Naive thymus-derived CD4-positive, alpha-beta T cell (primary cell): ENCODE measurements at regions of chr1 and their contacts with region 1.

Region 1: GRCh38 chr1:184222652-184223052 is 164.2 kb upstream of the C1orf21 start:
- DNase-seq: peak in 6 of 9 donors; percentile 11 to 31 (median 26)
- ATAC-seq: peak; percentile 60
- H3K4me3 ChIP-seq: no peak overlapping the region
- H3K4me3 Mint-ChIP-seq: peak overlapping the region in 2 of 10 donors; percentile 3 to 5
- H3K27ac ChIP-seq: no peak overlapping the region
- H3K27ac Mint-ChIP-seq: peak overlapping the region in 1 of 9 donors; percentile 6
- H3K4me1 ChIP-seq: no peaks in the 10 kb centered on the region
- H3K4me1 Mint-ChIP-seq: peaks cover 0 to 4% (median 0%) of the 10 kb centered on the region in 7 donors
- H3K27me3 ChIP-seq: no peaks in the 10 kb centered on the region
- H3K27me3 Mint-ChIP-seq: peaks cover 0 to 19% (median 9%) of the 10 kb centered on the region in 5 donors

Region 2: DNA sequence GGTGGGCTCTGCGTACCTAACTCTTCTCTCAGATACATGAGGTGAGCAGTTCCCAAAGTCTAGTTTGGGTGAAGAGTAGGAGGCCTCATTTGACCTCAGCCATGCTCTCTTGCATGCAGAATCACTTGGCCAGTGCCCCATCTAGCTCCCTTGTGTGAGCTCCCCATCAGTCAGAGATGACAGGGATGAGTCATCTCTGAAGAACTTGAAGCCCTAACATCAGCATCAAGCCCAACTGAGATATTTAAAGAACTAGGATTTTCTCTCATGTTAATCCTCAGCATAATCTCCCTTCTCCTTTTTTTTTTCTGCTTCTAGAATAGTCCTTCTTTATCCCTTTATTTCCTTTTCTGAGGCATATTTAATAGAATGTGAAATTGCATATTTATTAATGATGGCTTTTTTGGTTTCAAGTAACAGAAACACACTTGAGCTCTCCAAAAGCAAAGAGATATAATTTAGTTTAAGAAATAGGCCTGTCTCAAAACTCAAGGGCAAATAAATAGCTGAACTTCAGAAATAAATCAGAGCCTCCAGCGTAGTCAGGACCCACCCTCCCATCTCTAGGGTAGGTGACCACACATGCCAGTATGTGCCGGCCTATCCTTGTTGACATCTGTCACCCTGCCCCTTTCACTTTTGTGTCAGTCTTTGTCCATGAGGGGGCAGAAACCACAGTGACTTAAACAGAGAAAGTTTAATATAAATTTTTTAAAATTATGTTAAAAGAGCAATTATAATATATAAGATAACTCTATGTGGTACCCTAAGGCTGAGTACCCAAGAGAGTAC is 58.8 kb before region 1 on chr1:
- CTCF ChIA-PET with region 1: no interaction called
- POLR2A ChIA-PET with region 1: no interaction called
- intact Hi-C with region 1: loop called in 1 of 2 experiments (anchors 5 kb)
- DNase-seq: no peak
- ATAC-seq: no peak
- H3K4me3 ChIP-seq: no peak overlapping the region
- H3K4me3 Mint-ChIP-seq: no peak overlapping the region
- H3K27ac ChIP-seq: no peak overlapping the region
- H3K27ac Mint-ChIP-seq: peak overlapping the region in 1 of 9 donors; percentile 13
- H3K4me1 ChIP-seq: no peaks in the 10 kb centered on the region
- H3K4me1 Mint-ChIP-seq: peaks cover 0 to 2% (median 0%) of the 10 kb centered on the region in 7 donors
- H3K27me3 ChIP-seq: no peaks in the 10 kb centered on the region
- H3K27me3 Mint-ChIP-seq: peaks cover 2 to 8% (median 7%) of the 10 kb centered on the region in 5 donors